IMR-90 (cell line): ENCODE measurements at regions of chr5 and their contacts with region 1.

Region 1: DNA sequence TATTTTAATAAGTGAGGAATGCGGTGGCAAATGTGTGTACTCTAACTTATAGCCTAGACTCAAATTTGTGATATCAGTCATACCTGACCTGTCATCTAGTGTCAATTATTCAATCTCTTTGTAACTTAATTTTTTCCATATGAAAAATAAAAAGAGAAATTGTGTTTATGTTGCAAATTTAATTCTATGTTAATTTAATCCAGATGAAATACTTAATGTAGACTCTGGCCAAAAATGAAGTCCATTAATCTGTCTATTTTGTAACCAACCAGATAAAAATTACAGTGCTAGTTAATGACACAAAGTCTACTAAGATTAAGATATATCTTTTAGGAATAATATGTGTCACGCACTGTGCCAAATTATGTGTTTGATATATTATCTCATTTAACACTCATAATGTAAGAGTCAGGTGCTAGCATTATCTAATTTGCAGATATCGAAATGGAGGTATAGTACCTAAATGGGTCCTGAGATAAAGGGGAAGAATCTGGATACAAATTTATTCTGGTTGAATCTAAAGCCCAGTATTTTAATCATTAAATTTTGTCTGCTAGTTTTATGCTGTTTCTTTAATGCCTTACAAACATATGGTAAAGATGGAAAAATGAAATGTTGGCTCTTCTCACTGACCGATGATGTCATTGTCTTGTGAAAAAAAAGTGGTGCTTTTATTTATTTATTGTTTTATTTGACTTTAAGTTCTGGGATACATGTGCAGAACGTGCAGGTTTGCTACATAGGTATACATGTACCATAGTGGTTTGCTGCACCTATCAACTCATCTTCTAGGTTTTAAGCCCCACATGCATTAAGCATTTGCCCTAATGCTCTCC is 712.3 kb downstream of the KCTD16 start:
- DNase-seq: no peak
- ATAC-seq: no peak
- H3K4me3 ChIP-seq: no peak overlapping the region
- H3K27ac ChIP-seq: no peak overlapping the region
- H3K4me1 ChIP-seq: no peaks in the 10 kb centered on the region
- H3K27me3 ChIP-seq: no peaks in the 10 kb centered on the region
- CTCF ChIP-seq: no peak
- POLR2A ChIP-seq: no peak
- RAD21 ChIP-seq: no peak

Region 2: DNA sequence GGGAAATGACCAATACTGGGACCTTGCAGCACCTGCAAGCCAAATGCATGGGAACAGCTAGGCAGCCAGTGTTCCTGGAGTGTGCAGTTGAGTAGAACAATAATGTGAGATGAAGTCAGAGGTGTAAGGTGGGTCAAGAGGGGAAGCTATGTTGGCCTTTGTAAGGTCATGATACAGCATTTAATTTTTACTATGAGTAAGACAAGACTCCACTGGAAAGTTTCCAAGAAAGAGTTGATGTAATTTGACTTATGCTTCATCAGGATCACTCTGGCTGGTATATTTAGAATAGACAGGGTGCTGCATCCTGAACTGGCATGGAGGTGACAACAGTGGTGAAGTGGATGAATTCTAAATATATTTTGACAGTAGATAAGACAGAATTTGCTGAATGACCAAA is 32.5 kb after region 1 on chr5:
- CTCF ChIA-PET with region 1: no interaction called
- POLR2A ChIA-PET with region 1: no interaction called
- dilution Hi-C with region 1: no loop called
- in situ Hi-C with region 1: no loop called
- intact Hi-C with region 1: no loop called
- DNase-seq: no peak
- ATAC-seq: no peak
- H3K4me3 ChIP-seq: no peak overlapping the region
- H3K27ac ChIP-seq: no peak overlapping the region
- H3K4me1 ChIP-seq: no peaks in the 10 kb centered on the region
- H3K27me3 ChIP-seq: no peaks in the 10 kb centered on the region
- CTCF ChIP-seq: no peak
- POLR2A ChIP-seq: no peak
- RAD21 ChIP-seq: no peak

Region 3: GRCh38 chr5:144971108-144971850 is 88.3 kb after region 1 on chr5:
- CTCF ChIA-PET with region 1: no interaction called
- POLR2A ChIA-PET with region 1: no interaction called
- dilution Hi-C with region 1: no loop called
- in situ Hi-C with region 1: no loop called
- intact Hi-C with region 1: loop called (anchors 2 kb)
- DNase-seq: no peak
- ATAC-seq: no peak
- H3K4me3 ChIP-seq: no peak overlapping the region
- H3K27ac ChIP-seq: no peak overlapping the region
- H3K4me1 ChIP-seq: no peaks in the 10 kb centered on the region
- H3K27me3 ChIP-seq: no peaks in the 10 kb centered on the region
- CTCF ChIP-seq: no peak
- POLR2A ChIP-seq: no peak
- RAD21 ChIP-seq: no peak

Region 4: DNA sequence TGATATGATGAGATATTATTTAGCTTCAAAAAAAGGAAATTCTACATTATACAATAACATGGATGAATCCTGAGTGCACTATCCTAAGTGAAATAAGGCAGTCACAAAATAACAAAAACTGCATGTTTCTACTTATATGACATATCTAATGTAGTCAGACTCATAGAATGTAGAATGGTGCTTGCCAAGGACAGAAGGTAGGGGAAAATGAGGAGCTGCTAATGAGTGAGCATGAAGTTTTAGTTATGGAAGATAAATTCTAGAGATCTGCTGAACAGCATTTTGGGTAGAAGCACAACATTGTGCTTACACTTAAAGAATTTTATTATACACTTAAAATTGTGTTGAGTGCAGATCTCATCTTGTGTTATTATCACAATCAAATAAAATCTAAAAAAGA is 100.1 kb after region 1 on chr5:
- CTCF ChIA-PET with region 1: no interaction called
- POLR2A ChIA-PET with region 1: no interaction called
- dilution Hi-C with region 1: no loop called
- in situ Hi-C with region 1: no loop called
- intact Hi-C with region 1: no loop called
- DNase-seq: no peak
- ATAC-seq: no peak
- H3K4me3 ChIP-seq: no peak overlapping the region
- H3K27ac ChIP-seq: no peak overlapping the region
- H3K4me1 ChIP-seq: no peaks in the 10 kb centered on the region
- H3K27me3 ChIP-seq: no peaks in the 10 kb centered on the region
- CTCF ChIP-seq: no peak
- POLR2A ChIP-seq: no peak
- RAD21 ChIP-seq: no peak